ENCODE measurements at regions of chr3 and their contacts with region 1.

Region 1: DNA sequence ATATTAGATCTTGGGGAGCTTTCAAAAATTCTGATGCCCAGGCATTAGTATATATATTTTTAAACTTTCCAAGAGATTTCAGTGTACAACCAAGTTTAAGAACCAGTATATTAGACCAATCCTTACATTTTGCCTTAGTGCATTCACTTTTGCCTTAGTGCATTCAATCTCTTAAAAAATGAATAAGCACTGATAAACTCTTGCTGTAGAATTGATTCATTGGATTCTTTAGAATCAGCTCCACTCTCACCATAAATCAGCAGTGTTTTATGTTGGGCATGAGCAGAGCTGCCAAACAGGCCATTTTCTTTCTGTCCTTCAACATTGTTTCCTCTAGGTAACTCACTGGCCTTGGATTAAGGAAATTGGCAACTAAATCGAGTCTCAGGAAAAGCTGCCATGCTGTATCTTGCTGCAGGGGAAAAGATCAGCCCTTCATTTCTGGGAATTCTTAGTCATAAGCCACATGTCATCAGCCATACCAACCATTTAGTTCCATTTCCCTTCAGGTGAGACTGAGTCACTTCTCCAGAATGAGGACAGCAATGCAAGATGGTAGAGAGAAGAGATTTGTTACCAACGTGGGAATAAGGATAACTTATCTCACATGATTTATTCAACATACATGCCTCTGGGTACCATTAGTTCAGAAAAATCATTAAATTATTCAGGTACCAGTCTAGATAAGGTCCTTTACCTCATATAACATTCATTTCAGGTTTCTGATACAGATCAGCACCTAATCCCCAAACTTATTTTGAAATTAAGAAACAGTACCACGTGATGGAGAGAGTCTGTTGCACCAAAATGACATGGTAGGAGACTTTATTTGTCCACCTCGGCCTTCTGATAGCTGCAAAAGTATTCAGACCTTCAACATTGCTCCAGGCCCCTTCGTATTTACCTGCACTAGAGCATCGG is 192.5 kb downstream of the P3H2 start:
- DNase-seq: peak; percentile 14
- H3K4me3 Mint-ChIP-seq: no peak overlapping the region
- H3K27ac Mint-ChIP-seq: peak overlapping the region; percentile 19
- H3K4me1 Mint-ChIP-seq: peaks cover 22% of the 10 kb centered on the region
- H3K27me3 Mint-ChIP-seq: peaks cover 2% of the 10 kb centered on the region

Region 2: DNA sequence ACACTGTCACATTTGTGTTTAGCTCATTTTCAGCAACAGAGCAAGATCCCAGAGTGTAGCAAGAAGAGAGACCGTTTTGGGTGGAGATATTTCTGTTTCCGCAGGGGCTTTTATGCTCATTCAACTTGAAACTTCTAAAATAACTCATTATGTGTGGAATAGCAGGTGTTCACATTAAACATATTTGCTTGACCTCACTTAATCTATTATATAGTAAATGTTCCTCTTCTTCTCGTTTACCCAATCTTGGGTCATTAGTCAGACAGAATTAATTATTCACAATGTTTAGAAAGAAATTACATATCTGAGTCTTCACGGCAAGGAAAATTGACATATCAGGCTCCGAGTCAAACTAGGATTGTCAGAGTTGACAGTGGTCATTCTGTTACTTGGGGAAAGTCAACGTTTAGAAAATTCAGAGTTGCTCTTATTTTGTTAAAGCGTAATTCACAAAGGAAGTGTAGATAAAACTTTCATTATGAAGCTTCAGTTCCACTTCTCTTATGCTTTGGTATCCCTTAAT is 533.6 kb before region 1 on chr3:
- CTCF ChIA-PET with region 1: no interaction called
- POLR2A ChIA-PET with region 1: no interaction called
- intact Hi-C with region 1: loop called (anchors 5 kb)
- DNase-seq: no peak
- H3K4me3 Mint-ChIP-seq: no peak overlapping the region
- H3K27ac Mint-ChIP-seq: no peak overlapping the region
- H3K4me1 Mint-ChIP-seq: peaks cover 20% of the 10 kb centered on the region
- H3K27me3 Mint-ChIP-seq: no peaks in the 10 kb centered on the region

Region 3: GRCh38 chr3:189841473-189842210 is 86.6 kb before region 1 on chr3:
- CTCF ChIA-PET with region 1: no interaction called
- POLR2A ChIA-PET with region 1: no interaction called
- intact Hi-C with region 1: loop called (anchors 1 kb)
- DNase-seq: no peak
- H3K4me3 Mint-ChIP-seq: no peak overlapping the region
- H3K27ac Mint-ChIP-seq: no peak overlapping the region
- H3K4me1 Mint-ChIP-seq: peaks cover 12% of the 10 kb centered on the region
- H3K27me3 Mint-ChIP-seq: peaks cover 3% of the 10 kb centered on the region